WTC11 (cell line): ENCODE measurements at regions of chr9 and their contacts with region 1.

Region 1: GRCh38 chr9:12352045-12352315 is 341.2 kb upstream of the TYRP1 start:
- DNase-seq: no peak
- ATAC-seq: no peak
- H3K4me3 Mint-ChIP-seq: no peak overlapping the region
- H3K27ac Mint-ChIP-seq: no peak overlapping the region
- H3K4me1 Mint-ChIP-seq: no peaks in the 10 kb centered on the region
- H3K27me3 Mint-ChIP-seq: no peaks in the 10 kb centered on the region
- CTCF ChIP-seq: no peak

Region 2: DNA sequence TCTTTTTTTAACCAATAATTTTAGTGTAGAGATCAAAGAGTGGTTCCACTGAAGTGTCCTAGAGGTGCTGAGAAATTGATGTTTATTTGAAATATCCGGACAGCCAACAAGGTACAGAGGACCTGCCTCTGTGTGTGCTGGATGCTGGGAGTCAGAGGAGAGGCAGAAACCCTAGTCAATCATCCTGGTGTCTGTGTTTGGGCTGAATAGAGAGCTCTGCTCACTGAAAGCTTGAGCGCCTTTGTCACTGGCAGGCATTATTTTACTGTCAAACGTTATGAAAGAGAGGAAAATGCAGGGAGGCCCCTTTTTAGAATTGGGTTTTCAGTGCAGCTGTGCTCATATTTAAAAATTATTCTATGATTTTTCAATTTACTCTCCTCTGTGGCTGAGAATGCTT is 139.1 kb before region 1 on chr9:
- CTCF ChIA-PET with region 1: no interaction called
- POLR2A ChIA-PET with region 1: interaction called, 11 read pairs
- DNase-seq: no peak
- ATAC-seq: no peak
- H3K4me3 Mint-ChIP-seq: no peak overlapping the region
- H3K27ac Mint-ChIP-seq: no peak overlapping the region
- H3K4me1 Mint-ChIP-seq: no peaks in the 10 kb centered on the region
- H3K27me3 Mint-ChIP-seq: no peaks in the 10 kb centered on the region
- CTCF ChIP-seq: no peak